Naive thymus-derived CD8-positive, alpha-beta T cell (primary cell): ENCODE measurements at regions of chr10 and their contacts with region 1.

Region 1: GRCh38 chr10:96043033-96043932 is at the start of gene CCNJ:
- DNase-seq: peak; percentile 76 to 89 (median 86)
- ATAC-seq: peak; percentile 88
- H3K4me3 Mint-ChIP-seq: peak within 1 kb of the TSS; percentile 91 to 97 (median 94)
- H3K27ac Mint-ChIP-seq: peak within 1 kb of the TSS; percentile 79 to 97 (median 93)
- H3K4me1 Mint-ChIP-seq: peaks cover 15 to 50% (median 48%) of the 10 kb centered on the region in 4 donors
- H3K27me3 Mint-ChIP-seq: peaks cover 3 to 11% (median 5%) of the 10 kb centered on the region in 5 donors
- polyA plus RNA-seq, gene CCNJ: 0.56 to 1.8 (median 1.0) TPM

Region 2: DNA sequence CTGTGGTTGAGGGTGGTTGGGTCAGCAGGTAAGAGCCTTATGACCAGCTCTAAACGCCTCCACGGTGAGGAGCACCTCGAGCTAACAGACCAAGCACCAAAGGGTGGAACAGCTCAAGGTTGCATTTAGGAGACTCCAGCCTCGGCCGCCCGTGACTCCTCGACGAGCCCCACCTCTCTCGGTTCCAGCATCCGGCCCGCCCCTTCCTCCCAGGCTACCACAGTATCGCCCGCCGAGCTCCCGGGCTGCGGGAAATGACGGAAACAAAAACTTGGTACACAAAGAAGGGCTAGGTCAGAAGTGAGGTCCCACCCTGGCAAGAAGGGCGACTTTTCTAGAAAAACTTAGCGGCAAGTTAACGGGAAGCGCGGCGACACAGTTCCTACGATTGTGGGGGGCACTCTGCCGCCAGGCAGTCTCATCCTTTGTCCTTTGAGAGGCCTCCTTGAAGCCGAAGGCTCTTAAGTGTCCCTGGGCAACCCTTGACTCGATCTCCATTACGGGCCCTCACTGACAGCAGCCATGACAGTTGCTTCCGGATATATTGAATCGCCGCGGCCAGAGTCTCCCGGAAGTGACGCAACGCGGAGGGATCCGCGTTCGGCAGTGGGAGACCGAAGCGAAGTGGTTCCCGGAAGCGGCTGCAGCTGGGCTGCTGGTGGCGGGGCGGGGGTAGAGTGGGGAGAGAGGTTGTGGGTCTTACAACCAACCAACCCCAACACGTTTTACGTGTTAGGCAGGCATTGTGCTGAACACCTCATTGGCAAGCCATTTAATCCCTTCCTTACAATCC is 46.6 kb after region 1 on chr10:
- POLR2A ChIA-PET with region 1: interaction called, 15 read pairs
- DNase-seq: peak; percentile 84 to 96 (median 92)
- ATAC-seq: peak; percentile 85 to 89
- H3K4me3 Mint-ChIP-seq: peak overlapping the region; percentile 87 to 97 (median 95)
- H3K27ac Mint-ChIP-seq: peak overlapping the region; percentile 97 to 99 (median 99)
- H3K4me1 Mint-ChIP-seq: peaks cover 3 to 17% (median 10%) of the 10 kb centered on the region in 4 donors
- H3K27me3 Mint-ChIP-seq: peaks cover 16 to 36% (median 25%) of the 10 kb centered on the region in 5 donors

Region 3: GRCh38 chr10:96129387-96130325 is 86.4 kb after region 1 on chr10 and contains the start of gene ZNF518A:
- POLR2A ChIA-PET with region 1: interaction called, 23 read pairs
- DNase-seq: peak; percentile 70 to 98 (median 88)
- ATAC-seq: peak; percentile 81 to 83
- H3K4me3 Mint-ChIP-seq: peak within 1 kb of the TSS; percentile 85 to 98 (median 94)
- H3K27ac Mint-ChIP-seq: peak within 1 kb of the TSS; percentile 94 to 100 (median 99)
- H3K4me1 Mint-ChIP-seq: peaks cover 5 to 24% (median 22%) of the 10 kb centered on the region in 4 donors
- H3K27me3 Mint-ChIP-seq: peaks cover 14 to 41% (median 39%) of the 10 kb centered on the region in 5 donors
- polyA plus RNA-seq, gene ZNF518A: 7.6 to 11.2 (median 10.2) TPM